Ovary (tissue), 10 donors: ENCODE measurements at regions of chr4 and their contacts with region 1.

Region 1: DNA sequence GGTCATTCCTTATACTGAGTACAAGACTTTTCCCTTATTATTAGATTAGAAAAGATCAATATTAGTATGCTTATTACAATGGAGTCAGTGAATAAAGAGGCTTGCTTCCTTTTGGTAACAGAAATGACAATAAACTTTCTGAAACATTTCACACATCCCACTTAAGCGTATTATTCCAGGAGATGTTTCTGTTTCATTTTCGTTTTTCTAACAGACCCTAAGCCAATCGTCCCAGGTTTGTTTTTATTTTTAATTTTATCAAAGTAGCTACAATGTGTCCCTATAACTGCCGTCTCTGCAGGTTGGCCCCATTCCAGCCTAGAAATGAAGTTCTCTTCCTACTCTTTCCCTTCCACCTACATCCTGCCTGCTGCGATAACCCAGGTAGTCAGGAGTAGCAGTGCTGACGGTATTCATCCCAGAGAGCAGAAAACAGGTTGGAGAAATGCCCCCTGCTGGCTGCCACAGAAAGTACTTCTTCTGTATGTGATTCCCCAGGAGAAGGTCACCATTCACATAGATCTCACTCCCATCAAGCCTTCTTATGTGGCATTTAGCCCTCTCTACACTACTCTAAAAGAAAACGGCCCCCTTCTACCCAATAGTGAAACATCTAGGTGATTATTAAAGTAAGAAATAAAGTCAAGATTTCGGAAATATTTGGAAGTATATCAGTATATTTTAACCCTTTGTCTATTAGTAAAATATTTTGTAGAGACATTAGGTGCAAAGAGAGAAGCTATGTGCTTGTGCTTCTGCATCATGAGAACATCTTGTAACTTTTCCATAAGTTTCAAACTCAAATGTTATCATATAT is 40.4 kb downstream of the ENPEP start:
- DNase-seq: peak; percentile 66 to 76 (median 75)
- H3K4me3 ChIP-seq: peak overlapping the region; percentile 30
- H3K27ac ChIP-seq: peak overlapping the region; percentile 53 to 59
- H3K4me1 ChIP-seq: no peaks in the 10 kb centered on the region
- H3K27me3 ChIP-seq: no peaks in the 10 kb centered on the region
- CTCF ChIP-seq: peak; percentile 34 to 64 (median 35)
- EP300 ChIP-seq: no peak
- POLR2A ChIP-seq: no peak

Region 2: GRCh38 chr4:109998867-109999584 is 517.3 kb before region 1 on chr4:
- intact Hi-C with region 1: loop called in 3 of 4 experiments (anchors 2 to 5 kb)
- DNase-seq: no peak
- H3K4me3 ChIP-seq: no peak overlapping the region
- H3K27ac ChIP-seq: no peak overlapping the region
- H3K4me1 ChIP-seq: no peaks in the 10 kb centered on the region
- H3K27me3 ChIP-seq: no peaks in the 10 kb centered on the region
- CTCF ChIP-seq: peak in 2 of 3 donors; percentile 28 to 39
- EP300 ChIP-seq: no peak
- POLR2A ChIP-seq: no peak

Region 3: DNA sequence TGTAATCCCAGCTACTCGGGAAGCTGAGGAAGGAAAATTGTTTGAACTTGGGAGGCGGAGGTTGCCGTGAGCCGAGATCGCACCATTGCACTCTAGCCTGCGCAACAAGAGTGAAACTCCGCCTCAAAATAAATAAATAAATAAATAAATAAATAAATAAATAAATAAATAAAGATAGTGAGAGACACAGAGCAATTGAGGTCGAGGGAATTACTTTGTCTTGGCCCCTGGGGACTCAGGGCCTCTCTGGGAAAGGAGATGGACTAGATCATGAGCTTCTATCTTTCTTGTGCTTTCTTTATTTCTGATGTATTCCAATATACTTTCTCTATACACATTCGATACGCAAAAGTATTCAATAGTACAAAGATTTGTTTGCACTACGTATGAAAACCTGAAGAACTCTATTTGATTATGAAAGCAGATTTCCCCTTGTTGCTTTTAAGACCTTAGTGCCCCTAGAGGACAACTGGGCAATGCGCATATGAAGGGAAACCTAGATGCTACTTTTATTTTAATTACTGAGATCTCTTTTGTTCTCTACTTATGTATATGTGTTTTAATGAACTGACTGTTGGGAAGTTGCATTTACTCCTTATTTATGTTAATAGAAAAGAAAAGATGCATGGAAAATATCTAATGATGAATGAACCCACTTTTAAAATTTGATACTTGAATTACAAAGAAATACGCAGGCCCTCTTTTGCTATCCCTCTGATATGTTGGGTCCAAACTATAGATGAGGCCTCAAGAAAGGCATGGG is 305.1 kb before region 1 on chr4:
- intact Hi-C with region 1: loop called in 1 of 4 experiments (anchors 5 kb)
- DNase-seq: no peak
- H3K4me3 ChIP-seq: no peak overlapping the region
- H3K27ac ChIP-seq: no peak overlapping the region
- H3K4me1 ChIP-seq: no peaks in the 10 kb centered on the region
- H3K27me3 ChIP-seq: no peaks in the 10 kb centered on the region
- CTCF ChIP-seq: peak; percentile 17 to 45 (median 28)
- EP300 ChIP-seq: no peak
- POLR2A ChIP-seq: no peak